ENCODE measurements at regions of chr3 and their contacts with region 1.

Region 1: GRCh38 chr3:48439820-48440589 is at the starts of genes CCDC51 and TMA7:
- DNase-seq: peak; percentile 97 to 99 (median 98)
- H3K4me3 ChIP-seq: peak within 1 kb of the TSS; percentile 79
- H3K27ac ChIP-seq: peak within 1 kb of the TSS; percentile 44 to 78
- H3K4me1 ChIP-seq: no peaks in the 10 kb centered on the region
- H3K27me3 ChIP-seq: no peaks in the 10 kb centered on the region
- CTCF ChIP-seq: peak in 1 of 3 donors; percentile 13
- EP300 ChIP-seq: no peak
- POLR2A ChIP-seq: peak; percentile 98
- total RNA-seq, gene CCDC51: 6.3 to 8.5 (median 7.5) TPM
- total RNA-seq, gene TMA7: 138 to 318 (median 199) TPM

Region 2: GRCh38 chr3:48273594-48274211 is 166.3 kb before region 1 on chr3:
- intact Hi-C with region 1: loop called in 3 of 4 experiments (anchors 5 to 10 kb)
- DNase-seq: peak; percentile 34 to 52 (median 43)
- H3K4me3 ChIP-seq: no peak overlapping the region
- H3K27ac ChIP-seq: no peak overlapping the region
- H3K4me1 ChIP-seq: no peaks in the 10 kb centered on the region
- H3K27me3 ChIP-seq: no peaks in the 10 kb centered on the region
- CTCF ChIP-seq: peak; percentile 25 to 60 (median 60)
- EP300 ChIP-seq: no peak
- POLR2A ChIP-seq: no peak

Region 3: GRCh38 chr3:48400824-48401433 is 39.1 kb before region 1 on chr3:
- intact Hi-C with region 1: loop called (anchors 2 to 5 kb)
- DNase-seq: peak; percentile 51 to 67 (median 56)
- H3K4me3 ChIP-seq: no peak overlapping the region
- H3K27ac ChIP-seq: no peak overlapping the region
- H3K4me1 ChIP-seq: peaks cover 2% of the 10 kb centered on the region
- H3K27me3 ChIP-seq: no peaks in the 10 kb centered on the region
- CTCF ChIP-seq: peak; percentile 66 to 89 (median 81)
- EP300 ChIP-seq: no peak
- POLR2A ChIP-seq: no peak

Region 4: GRCh38 chr3:48635222-48636021 is 195.4 kb after region 1 on chr3 and contains the start of gene SLC26A6:
- intact Hi-C with region 1: no loop called
- DNase-seq: peak; percentile 94 to 97 (median 95)
- H3K4me3 ChIP-seq: peak within 1 kb of the TSS; percentile 65
- H3K27ac ChIP-seq: peak within 1 kb of the TSS; percentile 62 to 76
- H3K4me1 ChIP-seq: peaks cover 3% of the 10 kb centered on the region
- H3K27me3 ChIP-seq: no peaks in the 10 kb centered on the region
- CTCF ChIP-seq: peak; percentile 40 to 66 (median 52)
- EP300 ChIP-seq: no peak
- POLR2A ChIP-seq: peak; percentile 26
- total RNA-seq, gene SLC26A6: 7.9 to 19.1 (median 10.5) TPM

Region 5: DNA sequence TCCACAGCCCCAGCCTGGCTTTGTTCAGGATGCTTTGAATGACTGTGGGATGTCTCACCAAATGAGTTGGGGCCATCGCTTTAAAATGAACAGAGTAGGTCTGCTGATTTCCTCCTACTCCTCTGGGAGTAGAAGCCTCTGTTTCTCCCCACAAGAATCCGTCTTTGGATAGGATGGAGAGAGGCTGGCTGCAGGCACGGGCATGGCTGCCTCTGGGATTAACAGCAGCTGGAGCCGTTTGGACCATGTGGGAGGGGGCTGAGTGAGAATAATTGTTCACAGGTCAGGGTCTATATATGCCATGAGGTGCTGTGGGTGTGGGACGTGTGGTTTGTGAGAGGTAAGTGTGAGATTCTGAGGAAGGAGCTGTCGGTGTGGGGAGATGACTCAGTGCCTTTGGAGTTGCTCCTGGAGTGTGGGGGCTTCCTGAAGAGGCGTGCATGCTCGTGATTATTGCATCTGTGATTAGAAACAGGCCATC is 1186.1 kb after region 1 on chr3:
- intact Hi-C with region 1: no loop called
- DNase-seq: no peak
- H3K4me3 ChIP-seq: no peak overlapping the region
- H3K27ac ChIP-seq: no peak overlapping the region
- H3K4me1 ChIP-seq: no peaks in the 10 kb centered on the region
- H3K27me3 ChIP-seq: no peaks in the 10 kb centered on the region
- CTCF ChIP-seq: no peak
- EP300 ChIP-seq: no peak
- POLR2A ChIP-seq: no peak

Measured in ovary (tissue), 10 donors.